Sigmoid colon (tissue), 7 donors: ENCODE measurements at regions of chr1 and their contacts with region 1.

Region 1: GRCh38 chr1:163315773-163316374 is 5.9 kb upstream of the NUF2 start:
- DNase-seq: no peak
- H3K4me3 ChIP-seq: no peak overlapping the region
- H3K27ac ChIP-seq: no peak overlapping the region
- H3K4me1 ChIP-seq: peaks cover 0 to 9% (median 3%) of the 10 kb centered on the region in 4 donors
- H3K27me3 ChIP-seq: no peaks in the 10 kb centered on the region
- CTCF ChIP-seq: peak; percentile 50 to 70 (median 64)
- EP300 ChIP-seq: no peak
- POLR2A ChIP-seq: no peak

Region 2: GRCh38 chr1:162878000-162878596 is 437.8 kb before region 1 on chr1:
- intact Hi-C with region 1: loop called (anchors 1 kb)
- DNase-seq: peak; percentile 71
- H3K4me3 ChIP-seq: no peak overlapping the region
- H3K27ac ChIP-seq: no peak overlapping the region
- H3K4me1 ChIP-seq: no peaks in the 10 kb centered on the region
- H3K27me3 ChIP-seq: no peaks in the 10 kb centered on the region
- CTCF ChIP-seq: peak; percentile 51 to 76 (median 68)
- EP300 ChIP-seq: no peak
- POLR2A ChIP-seq: no peak

Region 3: DNA sequence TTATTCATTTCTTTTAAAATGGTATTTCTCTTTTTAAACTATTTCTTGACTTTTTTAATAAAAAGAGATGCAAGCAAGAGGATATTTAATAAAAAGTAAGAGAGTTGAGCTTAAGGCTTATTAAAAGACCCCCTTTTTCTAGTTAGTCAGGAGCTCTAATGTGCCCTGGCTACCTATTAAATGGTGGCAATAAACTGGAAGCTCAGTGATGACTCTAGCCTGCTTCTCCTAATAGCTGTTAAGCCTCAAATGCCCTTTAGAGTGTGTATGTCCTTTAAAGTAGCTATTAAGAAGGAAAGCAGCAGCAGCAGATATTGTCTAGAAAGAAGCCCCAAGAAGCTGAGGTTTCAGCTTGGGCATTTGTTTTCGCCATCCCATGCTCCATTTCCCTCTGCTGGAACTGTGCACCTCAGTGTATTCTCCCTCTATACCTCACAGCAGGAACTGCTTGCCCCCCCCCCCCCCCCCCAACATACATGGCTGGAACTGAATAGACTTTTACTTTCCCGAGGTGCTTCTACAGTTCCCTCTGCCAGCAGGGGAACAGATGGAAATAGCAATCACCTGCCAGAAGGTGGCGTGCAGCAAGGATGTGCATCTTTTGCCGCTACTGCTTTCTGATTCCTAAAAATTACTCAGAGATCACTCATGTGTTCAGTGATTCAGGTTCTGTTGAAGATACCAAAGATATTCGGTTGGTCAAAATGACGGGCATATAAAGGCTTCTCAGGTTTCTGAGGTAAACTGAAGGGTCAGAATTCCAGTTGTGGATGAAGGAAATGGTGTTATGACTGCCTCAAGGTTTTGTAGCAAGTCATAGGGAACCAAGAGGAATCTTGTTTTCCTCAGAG is 244.2 kb before region 1 on chr1:
- intact Hi-C with region 1: loop called (anchors 2 kb)
- DNase-seq: peak; percentile 79
- H3K4me3 ChIP-seq: peak overlapping the region in 2 of 4 donors; percentile 4 to 9
- H3K27ac ChIP-seq: peak overlapping the region in 3 of 4 donors; percentile 35 to 52 (median 47)
- H3K4me1 ChIP-seq: peaks cover 0 to 40% (median 16%) of the 10 kb centered on the region in 4 donors
- H3K27me3 ChIP-seq: no peaks in the 10 kb centered on the region
- CTCF ChIP-seq: peak; percentile 32 to 59 (median 55)
- EP300 ChIP-seq: no peak
- POLR2A ChIP-seq: no peak

Region 4: DNA sequence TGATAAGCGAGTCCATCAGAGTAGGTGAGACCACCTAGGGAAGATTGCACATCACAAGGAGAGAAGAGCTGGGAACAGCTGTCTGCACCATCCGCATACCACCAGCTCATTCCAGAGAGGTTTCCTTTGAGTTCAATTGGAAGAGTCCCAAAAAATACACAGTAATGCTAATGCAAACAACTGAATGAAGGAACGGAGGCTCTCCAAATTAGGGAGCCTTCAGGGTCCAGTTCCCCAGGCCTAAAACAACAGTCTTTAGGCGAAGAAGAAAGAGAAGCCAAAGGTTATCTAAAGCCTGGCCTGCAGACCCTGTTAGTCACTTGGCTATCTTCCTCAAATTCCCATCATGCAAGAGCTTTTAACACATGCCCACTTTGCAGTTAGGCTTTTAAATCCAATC is 1489.5 kb after region 1 on chr1:
- intact Hi-C with region 1: loop called (anchors 5 kb)
- DNase-seq: no peak
- H3K4me3 ChIP-seq: no peak overlapping the region
- H3K27ac ChIP-seq: peak overlapping the region in 3 of 4 donors; percentile 11 to 38 (median 33)
- H3K4me1 ChIP-seq: peaks cover 0 to 58% (median 33%) of the 10 kb centered on the region in 4 donors
- H3K27me3 ChIP-seq: no peaks in the 10 kb centered on the region
- CTCF ChIP-seq: no peak
- EP300 ChIP-seq: no peak
- POLR2A ChIP-seq: no peak